MCF 10A (cell line): ENCODE measurements at regions of chr6 and their contacts with region 1.

Region 1: DNA sequence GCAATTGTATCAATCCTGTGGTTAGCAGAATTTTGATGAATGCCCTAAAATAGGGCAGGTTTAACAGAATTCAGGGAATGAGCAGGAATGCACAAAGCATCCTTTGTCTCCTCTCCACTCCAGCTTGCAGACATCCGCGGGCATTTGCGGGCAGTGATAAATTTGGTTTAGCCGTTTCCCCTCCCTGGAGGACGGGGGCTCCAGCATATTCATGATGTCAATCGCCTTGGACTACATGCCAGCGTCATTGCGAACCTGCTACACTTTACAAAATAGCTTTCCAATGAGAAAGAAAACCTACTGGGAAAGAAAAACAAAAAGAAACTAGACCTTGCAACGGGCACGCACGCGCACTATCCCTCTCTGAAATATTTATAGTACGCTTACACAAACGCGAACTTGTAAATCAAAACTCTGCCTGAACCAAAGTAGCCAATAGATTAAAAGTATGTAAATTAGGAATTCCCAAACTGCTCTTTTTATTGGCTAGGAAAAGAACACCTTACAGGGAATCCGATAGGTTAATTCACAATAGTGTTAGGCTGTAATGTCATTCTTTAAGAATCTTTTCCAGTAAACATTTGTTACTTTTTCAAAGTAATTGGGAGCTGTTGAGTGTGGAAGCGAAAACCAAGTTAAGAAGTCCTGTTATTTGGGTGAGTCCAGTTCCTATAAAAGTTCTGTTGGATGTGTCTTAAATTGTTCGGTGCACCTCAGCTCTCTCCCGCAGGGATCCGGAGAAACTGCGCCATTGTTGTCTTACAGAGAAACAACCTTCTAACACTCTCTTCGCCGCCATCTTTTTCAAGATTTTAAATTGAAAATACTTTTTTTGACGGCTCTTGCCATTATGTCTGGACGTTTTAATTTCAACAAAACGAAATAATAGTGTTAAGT is 136.7 kb downstream of the HFE start:
- DNase-seq: peak; percentile 91
- H3K4me3 Mint-ChIP-seq: no peak overlapping the region
- H3K27ac Mint-ChIP-seq: no peak overlapping the region
- H3K4me1 Mint-ChIP-seq: peaks cover 6% of the 10 kb centered on the region
- H3K27me3 Mint-ChIP-seq: no peaks in the 10 kb centered on the region
- CTCF ChIP-seq: no peak

Region 2: GRCh38 chr6:26183581-26184366 is 40.1 kb before region 1 on chr6:
- CTCF ChIA-PET with region 1: no interaction called
- POLR2A ChIA-PET with region 1: interaction called, 26 read pairs
- intact Hi-C with region 1: no loop called
- DNase-seq: peak; percentile 56
- H3K4me3 Mint-ChIP-seq: peak overlapping the region; percentile 79
- H3K27ac Mint-ChIP-seq: peak overlapping the region; percentile 84
- H3K4me1 Mint-ChIP-seq: peaks cover 27% of the 10 kb centered on the region
- H3K27me3 Mint-ChIP-seq: no peaks in the 10 kb centered on the region
- CTCF ChIP-seq: no peak

Region 3: GRCh38 chr6:26234421-26235296 is 10.8 kb after region 1 on chr6:
- CTCF ChIA-PET with region 1: interaction called, 5 read pairs
- POLR2A ChIA-PET with region 1: interaction called, 200 read pairs
- intact Hi-C with region 1: no loop called
- DNase-seq: peak; percentile 90
- H3K4me3 Mint-ChIP-seq: peak overlapping the region; percentile 82
- H3K27ac Mint-ChIP-seq: peak overlapping the region; percentile 85
- H3K4me1 Mint-ChIP-seq: peaks cover 32% of the 10 kb centered on the region
- H3K27me3 Mint-ChIP-seq: no peaks in the 10 kb centered on the region
- CTCF ChIP-seq: no peak

Region 4: DNA sequence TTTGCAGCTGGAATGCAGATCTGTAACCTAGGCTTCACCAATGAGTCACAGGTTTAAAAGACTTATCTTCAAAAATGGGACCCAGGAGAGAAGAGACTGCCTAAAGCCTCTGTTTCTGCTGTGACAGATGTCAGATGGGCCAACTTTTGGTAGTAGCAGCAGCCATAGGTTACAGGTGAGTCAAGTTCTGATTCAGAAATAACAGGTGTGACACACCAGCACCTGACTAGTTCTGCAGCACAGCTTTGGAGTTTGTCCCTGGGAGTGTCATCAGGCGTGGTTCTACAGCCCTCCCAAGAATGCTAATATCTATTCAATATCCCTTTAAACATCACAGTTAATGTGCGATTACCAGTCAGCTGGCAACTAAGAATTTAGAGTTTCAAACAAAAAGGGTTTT is 19.2 kb after region 1 on chr6:
- CTCF ChIA-PET with region 1: no interaction called
- POLR2A ChIA-PET with region 1: interaction called, 200 read pairs
- intact Hi-C with region 1: no loop called
- DNase-seq: peak; percentile 14
- H3K4me3 Mint-ChIP-seq: no peak overlapping the region
- H3K27ac Mint-ChIP-seq: no peak overlapping the region
- H3K4me1 Mint-ChIP-seq: no peaks in the 10 kb centered on the region
- H3K27me3 Mint-ChIP-seq: no peaks in the 10 kb centered on the region
- CTCF ChIP-seq: no peak

Region 5: GRCh38 chr6:26295691-26296555 is 72.0 kb after region 1 on chr6:
- CTCF ChIA-PET with region 1: no interaction called
- POLR2A ChIA-PET with region 1: interaction called, 10 read pairs
- intact Hi-C with region 1: no loop called
- DNase-seq: peak; percentile 87
- H3K4me3 Mint-ChIP-seq: peak overlapping the region; percentile 63
- H3K27ac Mint-ChIP-seq: peak overlapping the region; percentile 81
- H3K4me1 Mint-ChIP-seq: peaks cover 22% of the 10 kb centered on the region
- H3K27me3 Mint-ChIP-seq: no peaks in the 10 kb centered on the region
- CTCF ChIP-seq: no peak

Region 6: DNA sequence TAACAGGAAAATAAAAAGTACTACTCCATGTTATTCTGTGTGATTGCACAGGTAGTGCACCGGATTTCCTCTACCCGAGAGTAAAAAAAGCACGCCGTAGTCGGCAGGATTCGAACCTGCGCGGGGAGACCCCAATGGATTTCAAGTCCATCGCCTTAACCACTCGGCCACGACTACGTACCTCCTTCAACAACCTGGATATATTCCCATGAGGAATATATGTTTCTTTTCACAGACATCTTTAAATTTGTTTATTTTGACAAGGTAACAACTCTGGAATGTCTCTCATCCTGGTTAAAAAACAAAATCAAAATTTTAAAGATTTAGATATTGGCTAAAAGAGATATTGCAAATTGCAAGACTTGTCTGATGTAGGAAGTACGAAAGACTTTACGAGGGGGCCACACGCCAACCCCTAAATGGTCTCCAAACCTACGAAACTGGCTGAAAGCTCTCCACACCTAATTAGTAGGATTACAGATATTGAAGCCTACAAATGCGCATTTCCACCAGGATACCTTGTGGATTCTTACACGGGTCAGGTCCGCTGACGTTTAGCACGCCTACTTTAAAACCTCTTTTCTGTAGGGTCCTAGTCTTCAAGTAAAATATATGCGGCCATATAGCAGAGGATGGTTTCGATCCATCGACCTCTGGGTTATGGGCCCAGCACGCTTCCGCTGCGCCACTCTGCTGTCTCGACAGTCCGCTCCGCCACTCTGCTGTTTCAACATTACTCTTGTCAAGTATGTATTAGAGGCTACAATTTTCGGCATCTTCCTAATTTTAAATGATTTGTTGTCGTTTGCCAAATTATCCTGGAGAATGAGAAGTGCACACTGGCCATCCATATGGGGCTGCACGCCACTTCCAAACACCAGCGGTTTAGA is 88.8 kb after region 1 on chr6:
- CTCF ChIA-PET with region 1: interaction called, 3 read pairs
- POLR2A ChIA-PET with region 1: interaction called, 11 read pairs
- intact Hi-C with region 1: loop called (anchors 5 kb)
- DNase-seq: peak; percentile 82
- H3K4me3 Mint-ChIP-seq: peak overlapping the region; percentile 79
- H3K27ac Mint-ChIP-seq: peak overlapping the region; percentile 74
- H3K4me1 Mint-ChIP-seq: peaks cover 26% of the 10 kb centered on the region
- H3K27me3 Mint-ChIP-seq: no peaks in the 10 kb centered on the region
- CTCF ChIP-seq: no peak

Region 7: GRCh38 chr6:27838058-27838944 is 1614.4 kb after region 1 on chr6:
- CTCF ChIA-PET with region 1: interaction called, 3 read pairs
- POLR2A ChIA-PET with region 1: interaction called, 24 read pairs
- intact Hi-C with region 1: no loop called
- DNase-seq: peak; percentile 98
- H3K4me3 Mint-ChIP-seq: no peak overlapping the region
- H3K27ac Mint-ChIP-seq: no peak overlapping the region
- H3K4me1 Mint-ChIP-seq: peaks cover 32% of the 10 kb centered on the region
- H3K27me3 Mint-ChIP-seq: no peaks in the 10 kb centered on the region
- CTCF ChIP-seq: no peak